ENCODE measurements at regions of chr11 and their contacts with region 1.

Region 1: GRCh38 chr11:8870411-8871170 is 40.4 kb upstream of the AKIP1 start:
- DNase-seq: peak; percentile 79

Region 2: DNA sequence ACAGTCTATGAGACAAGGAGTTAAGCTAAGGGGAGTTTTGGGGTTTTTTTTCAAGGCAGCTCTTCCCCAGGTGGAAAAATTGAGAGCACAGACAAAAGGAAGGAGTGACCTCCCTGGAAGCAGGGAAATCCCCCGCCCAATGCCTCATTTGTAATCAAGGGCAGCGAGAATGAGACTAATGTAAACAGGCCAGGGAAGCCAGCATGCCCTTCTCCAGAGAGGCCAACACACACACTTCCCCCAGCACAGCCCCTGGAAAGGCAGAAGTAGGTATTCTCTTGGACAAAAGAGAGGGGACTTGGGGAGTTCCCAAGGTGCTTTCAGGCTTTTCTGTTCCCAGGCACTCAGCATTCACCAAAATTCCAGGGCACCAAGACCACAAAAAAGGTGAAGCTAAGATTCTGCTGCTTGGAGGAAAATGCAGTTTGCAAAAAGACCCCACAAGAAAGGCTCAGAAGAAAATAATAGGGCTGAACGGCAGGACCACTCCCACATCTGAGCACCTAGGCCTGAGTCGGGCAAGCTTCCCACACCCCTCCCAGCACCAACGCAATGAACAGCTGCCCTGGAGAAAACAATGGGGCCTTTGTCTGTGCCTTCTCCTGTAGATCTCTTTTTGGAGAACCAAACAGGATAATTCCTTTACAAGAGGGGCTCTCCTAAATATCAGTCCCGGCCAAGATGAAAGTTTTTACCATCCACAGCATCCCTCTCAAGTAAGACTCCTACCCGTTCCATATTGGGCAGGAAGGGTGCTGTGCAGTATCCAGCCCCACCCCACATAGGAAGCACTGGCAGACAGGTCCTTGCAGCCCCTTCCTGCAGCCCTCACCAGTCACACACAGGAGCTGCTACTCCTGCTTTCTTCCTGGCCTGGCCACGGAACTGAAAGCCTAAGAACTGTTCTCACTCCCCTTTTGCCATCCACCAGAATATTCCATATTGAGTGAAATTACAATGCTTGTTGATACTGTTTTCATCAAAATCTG is 30.3 kb before region 1 on chr11:
- intact Hi-C with region 1: loop called (anchors 5 kb)
- DNase-seq: no peak